ENCODE measurements at regions of chr1 and their contacts with region 1.

Region 1: DNA sequence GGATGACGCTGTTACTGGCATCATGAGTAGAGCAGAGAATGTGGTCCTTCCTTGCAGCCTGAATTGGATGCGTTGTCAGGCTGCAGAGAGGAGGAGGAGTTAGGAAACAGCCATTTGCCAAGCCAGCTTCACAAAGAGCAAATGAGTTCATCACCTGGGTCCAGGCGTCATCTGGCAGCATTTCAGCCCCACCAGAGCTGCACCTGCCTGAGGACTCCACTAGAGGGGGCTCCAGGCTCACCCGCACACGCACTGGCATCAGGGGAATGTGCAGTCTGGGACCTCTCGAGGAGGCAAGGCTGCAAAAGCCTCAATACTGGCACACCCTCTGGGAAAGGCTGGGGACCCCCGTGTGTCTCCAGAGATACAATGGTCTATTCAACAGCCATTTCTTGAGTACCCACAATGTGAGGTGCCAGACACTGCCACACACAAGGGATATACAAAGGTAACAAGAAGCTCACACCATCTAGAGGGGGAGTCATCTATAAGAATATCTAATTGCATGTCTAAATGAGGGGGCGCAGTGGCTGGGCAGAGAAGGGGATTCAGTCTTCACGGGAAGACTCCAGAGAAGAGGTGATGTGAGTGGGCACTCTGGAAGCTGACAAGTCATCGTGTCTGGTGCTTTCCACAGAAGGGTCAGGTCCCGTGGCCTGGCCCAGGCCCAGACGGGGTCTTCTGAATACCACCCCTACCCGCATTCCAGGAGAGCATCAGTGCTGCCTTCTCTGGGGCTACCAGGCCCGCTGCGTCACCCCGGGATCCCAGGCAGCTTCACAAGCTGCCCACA is 53.5 kb upstream of the CNTN2 start:
- DNase-seq: peak; percentile 48 to 83
- ATAC-seq: peak; percentile 90 to 96 (median 93)
- H3K4me3 ChIP-seq: no peak overlapping the region
- H3K27ac ChIP-seq: no peak overlapping the region
- H3K4me1 ChIP-seq: no peaks in the 10 kb centered on the region
- H3K27me3 ChIP-seq: peaks cover 0 to 22% (median 2%) of the 10 kb centered on the region in 3 donors
- CTCF ChIP-seq: peak; percentile 84

Region 2: GRCh38 chr1:204837440-204838084 is 151.9 kb before region 1 on chr1:
- intact Hi-C with region 1: no loop called
- DNase-seq: no peak
- ATAC-seq: no peak
- H3K4me3 ChIP-seq: no peak overlapping the region
- H3K27ac ChIP-seq: no peak overlapping the region
- H3K4me1 ChIP-seq: no peaks in the 10 kb centered on the region
- H3K27me3 ChIP-seq: peaks cover 0 to 5% (median 0%) of the 10 kb centered on the region in 3 donors
- CTCF ChIP-seq: no peak

Region 3: GRCh38 chr1:205061665-205062069 is 72.2 kb after region 1 on chr1:
- intact Hi-C with region 1: loop called in 1 of 2 experiments (anchors 5 kb)
- DNase-seq: peak; percentile 66 to 75
- ATAC-seq: peak; percentile 59 to 79 (median 73)
- H3K4me3 ChIP-seq: no peak overlapping the region
- H3K27ac ChIP-seq: no peak overlapping the region
- H3K4me1 ChIP-seq: no peaks in the 10 kb centered on the region
- H3K27me3 ChIP-seq: no peaks in the 10 kb centered on the region
- CTCF ChIP-seq: peak; percentile 71

Region 4: DNA sequence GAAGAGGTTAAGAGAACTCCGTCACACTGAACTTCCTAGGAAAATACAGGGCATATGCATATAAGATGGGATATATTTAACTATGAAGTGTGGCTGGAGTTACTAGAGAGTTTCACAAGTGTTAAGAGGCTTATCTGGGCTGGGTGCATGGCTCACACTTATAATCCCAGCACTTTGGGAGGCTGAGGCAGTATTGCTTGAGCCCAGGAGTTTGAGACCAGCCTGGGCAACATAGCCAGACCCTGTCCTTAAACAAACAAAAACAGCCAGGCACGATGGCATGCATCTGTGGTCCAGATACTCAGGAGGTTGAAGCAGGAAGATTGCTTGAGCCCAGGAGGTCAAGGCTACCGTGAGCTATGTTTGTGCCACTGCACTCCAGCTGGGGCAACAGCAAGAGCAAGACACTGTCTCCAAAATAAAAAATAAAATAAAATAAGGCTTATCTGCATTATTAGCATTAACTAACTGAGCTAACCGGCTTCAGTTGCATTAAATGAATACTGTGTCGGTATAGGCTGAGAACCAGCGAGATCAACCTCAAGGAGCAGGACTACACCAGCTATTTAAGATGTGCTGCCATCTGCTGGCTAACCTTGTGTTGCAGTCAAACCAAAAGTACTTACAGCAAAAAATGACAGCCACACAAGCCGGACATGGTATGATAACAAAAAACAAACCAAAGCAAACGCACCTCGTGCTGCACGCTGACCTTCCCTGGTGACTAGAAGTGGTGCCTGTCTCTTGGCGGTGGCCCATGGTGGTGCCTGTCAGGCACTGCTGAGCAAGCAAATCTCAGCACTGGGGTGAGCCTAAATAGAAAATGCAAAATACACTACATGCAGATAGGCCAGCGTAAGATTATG is 152.0 kb after region 1 on chr1:
- intact Hi-C with region 1: loop called in 1 of 2 experiments (anchors 5 kb)
- DNase-seq: peak; percentile 58 to 80
- ATAC-seq: peak; percentile 75 to 90 (median 84)
- H3K4me3 ChIP-seq: peak overlapping the region; percentile 20
- H3K27ac ChIP-seq: no peak overlapping the region
- H3K4me1 ChIP-seq: peaks cover 15% of the 10 kb centered on the region
- H3K27me3 ChIP-seq: no peaks in the 10 kb centered on the region
- CTCF ChIP-seq: peak; percentile 81

Measured in psoas muscle (tissue), 8 donors.